Transverse colon (tissue), 4 donors: ENCODE measurements at regions of chr10 and their contacts with region 1.

Region 1: GRCh38 chr10:127003032-127003685 is 97.9 kb downstream of the DOCK1 start:
- DNase-seq: no peak
- H3K4me3 ChIP-seq: no peak overlapping the region
- H3K27ac ChIP-seq: no peak overlapping the region
- H3K4me1 ChIP-seq: no peaks in the 10 kb centered on the region
- H3K27me3 ChIP-seq: no peaks in the 10 kb centered on the region
- CTCF ChIP-seq: no peak
- EP300 ChIP-seq: no peak
- POLR2A ChIP-seq: no peak

Region 2: DNA sequence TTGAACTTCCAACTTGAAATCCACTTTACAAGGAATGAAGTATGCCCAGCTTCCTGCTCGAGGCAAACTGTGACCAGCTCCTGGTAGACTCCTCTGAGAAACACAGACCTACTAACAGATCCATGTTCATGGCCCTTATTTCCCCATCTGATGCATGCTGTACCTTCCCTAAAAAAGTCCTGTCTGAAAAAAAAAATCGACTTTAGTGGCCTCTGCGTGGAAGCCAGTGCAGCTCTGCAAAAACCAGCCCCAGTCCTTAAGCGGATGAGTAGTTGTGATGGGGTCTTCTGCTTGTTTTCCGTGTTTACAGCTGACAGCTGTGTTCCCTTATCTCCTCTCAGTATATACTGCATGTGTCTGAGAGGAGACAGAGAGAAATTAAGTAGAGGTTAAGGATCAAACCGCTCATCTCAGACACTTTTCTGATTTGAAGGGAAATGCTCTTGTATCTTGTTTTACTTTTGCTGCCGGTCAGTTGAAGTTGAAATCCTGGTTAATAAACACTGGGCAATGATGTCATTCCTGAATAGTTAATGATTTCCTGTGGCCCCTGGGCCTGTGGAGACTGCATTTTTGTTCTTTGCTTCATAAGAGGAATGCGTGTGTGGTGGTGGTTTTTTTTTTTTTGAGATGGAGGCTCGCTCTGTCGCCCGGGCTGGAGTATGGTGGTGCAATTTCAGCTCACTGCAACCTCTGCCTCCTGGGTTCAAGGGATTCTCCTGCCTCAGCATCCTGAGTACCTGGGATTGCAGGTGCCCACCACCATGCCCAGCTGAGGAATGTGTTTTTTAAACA is 30.3 kb before region 1 on chr10:
- in situ Hi-C with region 1: no loop called
- intact Hi-C with region 1: loop called (anchors 1 kb)
- DNase-seq: no peak
- H3K4me3 ChIP-seq: no peak overlapping the region
- H3K27ac ChIP-seq: peak overlapping the region in 3 of 4 donors; percentile 8 to 30 (median 20)
- H3K4me1 ChIP-seq: peaks cover 0 to 4% (median 0%) of the 10 kb centered on the region in 4 donors
- H3K27me3 ChIP-seq: no peaks in the 10 kb centered on the region
- CTCF ChIP-seq: no peak
- EP300 ChIP-seq: no peak
- POLR2A ChIP-seq: no peak

Region 3: DNA sequence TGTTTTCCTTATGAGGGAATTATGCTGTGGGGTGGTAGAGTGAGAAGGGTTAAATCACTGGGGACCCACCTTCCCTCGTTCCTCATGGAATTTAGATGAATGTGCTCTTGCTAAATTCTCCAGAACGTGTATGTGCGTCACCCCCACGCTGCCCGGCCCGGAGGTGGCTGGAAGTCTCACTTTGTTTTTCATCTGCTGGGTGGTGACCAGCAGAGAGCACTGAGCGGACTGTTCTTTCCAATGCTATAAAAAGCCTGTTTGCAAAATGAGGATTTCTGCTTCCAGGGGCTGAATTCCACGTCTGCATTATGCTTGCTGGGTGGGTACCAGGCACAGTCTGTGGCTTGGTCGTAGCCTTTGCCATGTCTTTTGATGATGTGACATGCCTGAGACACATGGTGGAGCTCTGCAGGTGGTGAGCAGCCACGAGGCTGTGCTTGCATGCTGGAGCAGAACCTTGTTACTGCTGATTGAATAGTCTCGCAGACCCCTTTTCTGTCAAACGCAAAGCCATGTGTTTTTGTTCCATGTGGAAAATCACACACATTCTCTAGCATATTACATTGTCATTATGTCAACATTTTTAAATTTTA is 225.1 kb after region 1 on chr10:
- in situ Hi-C with region 1: no loop called
- intact Hi-C with region 1: no loop called
- DNase-seq: no peak
- H3K4me3 ChIP-seq: no peak overlapping the region
- H3K27ac ChIP-seq: no peak overlapping the region
- H3K4me1 ChIP-seq: no peaks in the 10 kb centered on the region
- H3K27me3 ChIP-seq: no peaks in the 10 kb centered on the region
- CTCF ChIP-seq: no peak
- EP300 ChIP-seq: no peak
- POLR2A ChIP-seq: no peak